Heart right ventricle (tissue), 16 donors: ENCODE measurements at regions of chr6 and their contacts with region 1.

Region 1: GRCh38 chr6:41318654-41319565 is 16.5 kb upstream of the NCR2 start:
- DNase-seq: peak; percentile 63 to 82
- ATAC-seq: peak; percentile 90 to 98 (median 94)
- H3K4me3 ChIP-seq: peak overlapping the region in 7 of 10 donors; percentile 9 to 36 (median 33)
- H3K27ac ChIP-seq: no peak overlapping the region
- H3K4me1 ChIP-seq: peaks cover 0 to 11% (median 6%) of the 10 kb centered on the region in 9 donors
- H3K27me3 ChIP-seq: peaks cover 0 to 72% (median 61%) of the 10 kb centered on the region in 7 donors
- CTCF ChIP-seq: peak; percentile 99 to 100 (median 100)

Region 2: DNA sequence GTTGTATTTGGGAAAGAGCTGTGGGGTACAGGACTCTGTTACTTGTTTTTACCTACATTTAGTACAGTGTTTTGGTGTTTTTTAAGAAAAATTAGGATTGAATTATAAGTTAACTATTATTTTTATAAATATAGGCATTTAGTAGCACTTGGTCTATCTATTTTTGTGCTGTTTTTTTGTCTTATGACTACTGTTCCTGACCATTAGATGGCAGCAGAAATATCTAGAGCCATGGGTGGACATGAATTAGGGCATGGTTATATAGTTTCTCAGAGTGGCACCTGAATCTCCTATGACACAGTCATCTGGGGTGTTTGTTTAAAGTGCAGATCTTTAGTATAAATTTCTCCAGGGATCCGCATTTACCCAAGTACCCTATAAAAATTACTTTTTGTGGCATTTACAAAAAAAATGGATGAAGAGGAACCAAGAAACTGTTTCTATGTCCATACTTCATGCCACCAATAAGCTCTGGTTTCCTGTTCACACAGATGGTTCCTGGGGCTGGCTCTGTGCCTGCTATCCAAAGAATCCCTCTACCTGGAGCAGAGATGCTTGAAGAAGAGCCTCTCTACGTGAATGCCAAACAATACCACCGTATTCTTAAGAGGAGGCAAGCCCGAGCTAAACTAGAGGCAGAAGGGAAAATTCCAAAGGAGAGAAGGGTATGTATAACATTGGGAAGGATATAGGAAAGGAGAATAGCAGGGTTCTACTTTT is 226.3 kb before region 1 on chr6:
- intact Hi-C with region 1: loop called in 9 of 10 experiments (anchors 5 to 10 kb)
- DNase-seq: no peak
- ATAC-seq: no peak
- H3K4me3 ChIP-seq: no peak overlapping the region
- H3K27ac ChIP-seq: no peak overlapping the region
- H3K4me1 ChIP-seq: peaks cover 0 to 13% (median under 1%) of the 10 kb centered on the region in 9 donors
- H3K27me3 ChIP-seq: no peaks in the 10 kb centered on the region
- CTCF ChIP-seq: peak in 6 of 9 donors; percentile 19 to 41 (median 29)

Region 3: DNA sequence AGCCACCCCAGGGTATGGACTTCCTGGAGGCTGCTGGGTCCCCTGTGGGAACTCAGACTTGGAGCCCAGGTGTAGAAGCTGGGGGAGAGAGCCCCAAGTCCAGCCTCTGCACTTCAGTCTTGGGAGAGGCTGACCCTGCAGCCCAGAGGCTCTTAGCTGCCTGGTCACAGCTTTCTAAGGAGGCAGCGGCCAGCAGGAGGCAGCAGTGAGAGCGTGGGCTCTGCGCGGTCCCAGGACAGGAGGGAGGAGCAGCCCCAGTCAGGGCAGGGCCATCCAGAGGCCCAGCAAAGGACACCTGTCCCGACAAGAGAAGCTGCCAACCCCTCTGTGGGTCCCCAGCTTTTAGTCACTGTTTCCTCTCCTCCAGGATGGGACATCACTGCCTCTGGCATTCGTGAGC is 127.3 kb before region 1 on chr6:
- intact Hi-C with region 1: loop called in 1 of 10 experiments (anchors 10 kb)
- DNase-seq: peak in 1 of 2 donors; percentile 45
- ATAC-seq: peak in 4 of 8 donors; percentile 54 to 67 (median 59)
- H3K4me3 ChIP-seq: no peak overlapping the region
- H3K27ac ChIP-seq: no peak overlapping the region
- H3K4me1 ChIP-seq: no peaks in the 10 kb centered on the region
- H3K27me3 ChIP-seq: peaks cover 0 to 45% (median 26%) of the 10 kb centered on the region in 7 donors
- CTCF ChIP-seq: peak in 7 of 9 donors; percentile 20 to 57 (median 50)

Region 4: DNA sequence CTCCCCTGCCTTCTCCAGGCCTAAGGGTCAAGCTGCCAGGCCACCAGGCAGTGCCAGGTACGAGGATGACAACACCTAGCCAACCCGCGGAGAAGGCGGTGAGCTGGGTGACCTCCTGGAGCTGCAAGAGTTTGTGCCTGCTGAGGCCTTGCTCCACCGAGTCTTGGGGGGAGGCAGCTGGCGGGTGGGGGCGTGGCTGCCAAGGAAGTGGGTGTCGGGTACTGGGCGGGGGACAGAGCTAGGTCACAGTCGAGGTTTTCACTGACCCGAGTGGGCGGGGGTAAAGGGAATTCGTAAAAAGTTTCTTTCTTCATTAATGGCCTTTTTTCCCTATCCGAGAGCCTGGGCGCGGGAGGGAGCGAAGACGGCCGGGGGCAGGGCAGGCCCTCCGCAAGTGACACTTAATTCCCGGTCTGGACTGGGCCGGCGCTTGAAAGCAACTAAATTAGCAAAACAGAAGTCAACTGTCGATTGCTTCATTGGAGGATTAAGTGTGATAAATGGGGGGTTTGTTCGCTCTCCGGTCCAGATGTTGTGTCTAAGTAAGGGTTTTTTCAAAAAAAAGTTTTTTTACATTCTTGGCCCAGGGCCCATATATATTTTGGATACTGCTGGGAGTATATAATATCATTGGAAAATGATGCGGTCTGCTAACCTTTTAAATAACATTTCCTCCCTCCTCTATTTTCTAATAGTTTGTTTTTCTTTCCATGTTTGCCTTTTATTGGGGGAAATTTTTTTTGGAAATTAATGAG is 184.2 kb after region 1 on chr6:
- intact Hi-C with region 1: no loop called
- DNase-seq: peak in 1 of 2 donors; percentile 20
- ATAC-seq: no peak
- H3K4me3 ChIP-seq: peak overlapping the region in 5 of 10 donors; percentile 20 to 54 (median 45)
- H3K27ac ChIP-seq: peak overlapping the region in 1 of 10 donors; percentile 13
- H3K4me1 ChIP-seq: peaks cover 5 to 34% (median 20%) of the 10 kb centered on the region in 9 donors
- H3K27me3 ChIP-seq: peaks cover 0 to 66% (median 44%) of the 10 kb centered on the region in 7 donors
- CTCF ChIP-seq: no peak